HCT116 (cell line): ENCODE measurements at regions of chr10 and their contacts with region 1.

Region 1: DNA sequence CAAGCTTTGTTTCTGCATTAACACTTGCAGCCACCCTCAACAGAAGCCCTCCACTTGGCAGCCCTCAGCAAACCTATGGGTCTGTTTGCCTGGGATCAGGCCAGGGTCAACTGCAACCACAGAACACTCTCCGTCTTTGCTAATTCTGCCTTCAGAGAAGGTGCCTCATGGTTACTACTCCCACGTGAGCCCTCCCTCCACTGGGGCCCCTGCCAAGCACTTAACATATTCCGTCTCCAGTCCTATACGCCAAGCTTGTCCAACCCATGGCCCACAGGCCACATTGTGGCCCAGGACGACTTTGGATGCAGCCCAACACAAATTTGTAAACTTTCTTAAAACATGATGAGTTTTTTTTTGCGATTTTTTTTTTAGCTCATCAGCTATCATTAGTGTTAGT is 54.7 kb downstream of the HSPA12A start:
- DNase-seq: no peak
- ATAC-seq: no peak
- H3K4me3 ChIP-seq: no peak overlapping the region
- H3K27ac ChIP-seq: no peak overlapping the region
- H3K4me1 ChIP-seq: no peaks in the 10 kb centered on the region
- H3K27me3 ChIP-seq: no peaks in the 10 kb centered on the region
- CTCF ChIP-seq: no peak
- POLR2A ChIP-seq: no peak
- RAD21 ChIP-seq: no peak

Region 2: GRCh38 chr10:116765547-116766162 is 78.0 kb after region 1 on chr10:
- CTCF ChIA-PET with region 1: interaction called, 6 read pairs
- POLR2A ChIA-PET with region 1: no interaction called
- RAD21 ChIA-PET with region 1: interaction called in 1 of 2 experiments, 3 read pairs
- intact Hi-C with region 1: loop called (anchors 1 kb)
- DNase-seq: peak; percentile 66
- ATAC-seq: peak; percentile 97
- H3K4me3 ChIP-seq: no peak overlapping the region
- H3K27ac ChIP-seq: no peak overlapping the region
- H3K4me1 ChIP-seq: 0 out of 4 replicates have a peak, but pooled peaks cover 0 to 5% of the 10 kb centered on the region in 2 experiments
- H3K27me3 ChIP-seq: peaks cover 9% of the 10 kb centered on the region; the same call in 1 of the 2 replicates
- CTCF ChIP-seq: peak; percentile 82 to 98 (median 96); a peak in 5 of 6 replicates
- POLR2A ChIP-seq: no peak
- RAD21 ChIP-seq: peak; percentile 86